ENCODE measurements at regions of chr20 and their contacts with region 1.

Region 1: GRCh38 chr20:33097001-33097400 is 17.6 kb downstream of the BPIFB4 start:
- DNase-seq: no peak
- ATAC-seq: no peak
- H3K4me3 Mint-ChIP-seq: no peak overlapping the region
- H3K27ac Mint-ChIP-seq: no peak overlapping the region
- H3K4me1 Mint-ChIP-seq: no peaks in the 10 kb centered on the region
- H3K27me3 Mint-ChIP-seq: no peaks in the 10 kb centered on the region
- CTCF ChIP-seq: no peak

Region 2: GRCh38 chr20:32902456-32903420 is 194.3 kb before region 1 on chr20:
- CTCF ChIA-PET with region 1: interaction called, 13 read pairs
- POLR2A ChIA-PET with region 1: no interaction called
- DNase-seq: peak; percentile 60
- ATAC-seq: peak; percentile 78
- H3K4me3 Mint-ChIP-seq: no peak overlapping the region
- H3K27ac Mint-ChIP-seq: no peak overlapping the region
- H3K4me1 Mint-ChIP-seq: no peaks in the 10 kb centered on the region
- H3K27me3 Mint-ChIP-seq: no peaks in the 10 kb centered on the region
- CTCF ChIP-seq: peak; percentile 89

Region 3: DNA sequence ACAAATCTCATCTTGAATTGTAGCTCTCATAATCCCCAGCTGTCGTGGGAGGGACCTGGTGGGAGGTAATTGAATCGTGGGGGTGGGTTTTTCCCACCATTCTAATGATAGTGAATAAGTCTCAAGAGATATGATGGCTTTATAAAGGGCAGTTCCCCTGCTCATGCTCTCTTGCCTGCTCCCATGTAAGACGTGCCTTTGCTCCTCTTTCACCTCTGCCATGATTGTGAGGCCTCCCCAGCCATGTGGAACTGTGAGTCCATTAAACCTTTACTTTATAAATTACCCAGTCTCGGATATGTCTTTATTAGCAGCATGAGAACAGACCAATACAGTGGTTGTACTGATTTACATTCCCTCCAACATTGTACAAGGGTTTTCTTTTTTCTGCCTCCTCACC is 162.4 kb before region 1 on chr20:
- CTCF ChIA-PET with region 1: no interaction called
- POLR2A ChIA-PET with region 1: no interaction called
- DNase-seq: no peak
- ATAC-seq: no peak
- H3K4me3 Mint-ChIP-seq: no peak overlapping the region
- H3K27ac Mint-ChIP-seq: no peak overlapping the region
- H3K4me1 Mint-ChIP-seq: no peaks in the 10 kb centered on the region
- H3K27me3 Mint-ChIP-seq: no peaks in the 10 kb centered on the region; the same call in 1 of the 2 replicates
- CTCF ChIP-seq: no peak

Region 4: GRCh38 chr20:33169176-33169794 is 72.3 kb after region 1 on chr20:
- CTCF ChIA-PET with region 1: no interaction called
- POLR2A ChIA-PET with region 1: no interaction called
- DNase-seq: peak; percentile 70
- ATAC-seq: no peak
- H3K4me3 Mint-ChIP-seq: no peak overlapping the region
- H3K27ac Mint-ChIP-seq: no peak overlapping the region
- H3K4me1 Mint-ChIP-seq: no peaks in the 10 kb centered on the region
- H3K27me3 Mint-ChIP-seq: peaks cover 10% of the 10 kb centered on the region
- CTCF ChIP-seq: peak; percentile 64